ENCODE measurements at regions of chr4 and their contacts with region 1.

Region 1: GRCh38 chr4:2468445-2469192 is at the start of gene RNF4:
- DNase-seq: peak; percentile 97
- ATAC-seq: peak; percentile 99
- total RNA-seq, gene RNF4: 44.5 TPM

Region 2: GRCh38 chr4:2262143-2262943 is 206.3 kb before region 1 on chr4:
- intact Hi-C with region 1: loop called (anchors 10 kb)
- DNase-seq: peak; percentile 99
- ATAC-seq: peak; percentile 97

Region 3: GRCh38 chr4:2402029-2402428 is 66.6 kb before region 1 on chr4:
- intact Hi-C with region 1: no loop called
- DNase-seq: peak; percentile 69
- ATAC-seq: peak; percentile 67

Region 4: GRCh38 chr4:2497931-2498330 is 29.3 kb after region 1 on chr4:
- intact Hi-C with region 1: loop called (anchors 1 kb)
- DNase-seq: no peak
- ATAC-seq: peak; percentile 72

Region 5: GRCh38 chr4:2862528-2862927 is 393.9 kb after region 1 on chr4:
- intact Hi-C with region 1: no loop called
- DNase-seq: no peak
- ATAC-seq: no peak

Measured in sciatic nerve (tissue), 2 donors.